ENCODE measurements at regions of chr6 and their contacts with region 1.

Region 1: DNA sequence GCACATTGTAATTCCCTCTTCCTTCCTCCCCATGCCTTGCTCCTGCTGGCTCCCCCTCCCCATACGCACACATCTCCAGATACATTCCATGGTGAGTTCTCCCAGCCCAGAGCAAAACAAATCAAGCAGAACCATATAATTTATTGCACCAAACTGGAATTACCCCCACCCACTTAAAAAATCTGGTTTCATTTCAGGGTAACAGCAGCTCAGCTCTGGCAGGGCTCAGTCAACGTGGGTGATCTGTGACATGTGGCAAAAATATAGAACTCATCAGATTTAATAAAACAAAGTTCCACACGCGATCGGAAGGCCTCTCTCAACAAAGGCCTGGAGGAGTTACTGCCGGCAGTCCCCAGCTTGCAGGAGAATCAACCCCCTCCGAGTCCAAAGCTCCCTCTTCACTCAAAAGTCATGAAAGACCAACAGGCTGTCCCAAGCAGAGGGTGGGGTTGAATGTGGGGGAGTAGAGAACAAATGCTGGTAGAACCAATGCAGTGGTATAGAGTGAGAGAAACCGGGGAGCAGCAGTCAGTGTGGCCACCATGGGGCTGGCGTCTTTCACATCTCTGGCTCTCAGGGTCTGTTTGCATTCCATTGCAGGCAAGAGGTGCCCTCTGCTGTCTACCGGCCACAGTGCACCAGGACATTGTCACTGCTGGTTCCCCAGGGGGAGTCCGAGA is 323.3 kb upstream of the NT5E start:
- DNase-seq: peak; percentile 73
- H3K4me3 Mint-ChIP-seq: no peak overlapping the region
- H3K27ac Mint-ChIP-seq: no peak overlapping the region
- H3K4me1 Mint-ChIP-seq: peaks cover 22% of the 10 kb centered on the region
- H3K27me3 Mint-ChIP-seq: no peaks in the 10 kb centered on the region
- CTCF ChIP-seq: peak; percentile 80

Region 2: DNA sequence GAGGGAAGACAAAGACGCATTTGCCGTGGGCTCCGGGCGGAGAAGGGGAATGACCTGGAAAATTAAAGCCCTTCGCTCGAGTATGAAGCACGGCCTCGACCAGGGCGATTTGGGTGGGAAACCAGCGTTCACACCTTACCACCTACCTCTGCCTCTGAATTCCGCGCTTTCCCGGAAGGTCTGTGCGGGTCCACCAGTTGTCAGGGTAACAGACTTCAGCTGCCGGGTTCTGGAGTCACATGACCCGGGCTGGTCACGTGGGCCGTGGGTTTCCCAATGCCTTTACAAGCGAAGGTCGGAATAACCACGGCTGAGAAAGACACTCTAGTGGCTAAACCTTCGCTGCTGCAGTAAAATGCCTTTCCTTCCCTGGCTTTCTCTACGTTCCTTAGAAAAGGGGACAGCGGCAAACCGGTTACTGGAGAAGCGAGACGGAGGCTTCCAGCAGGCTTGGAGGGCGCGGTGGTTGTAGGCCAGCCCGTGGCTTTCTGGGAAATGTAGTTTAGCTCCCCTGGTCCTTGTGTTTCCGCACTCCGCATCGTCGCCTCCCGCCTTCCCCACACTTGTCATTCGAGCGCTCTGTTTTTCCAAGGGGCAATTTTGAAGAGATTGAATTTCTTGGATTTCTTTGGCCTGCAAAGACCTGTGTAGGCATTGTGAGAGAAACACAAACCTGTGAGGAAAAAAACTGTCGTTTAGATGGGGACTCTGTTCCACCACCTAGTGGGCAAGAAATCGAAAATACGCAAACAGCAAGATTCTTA is 899.0 kb before region 1 on chr6 and contains the start of gene CEP162:
- CTCF ChIA-PET with region 1: interaction called, 4 read pairs
- POLR2A ChIA-PET with region 1: no interaction called
- intact Hi-C with region 1: loop called (anchors 5 kb)
- DNase-seq: peak; percentile 87
- H3K4me3 Mint-ChIP-seq: peak within 1 kb of the TSS; percentile 94
- H3K27ac Mint-ChIP-seq: peak within 1 kb of the TSS; percentile 72
- H3K4me1 Mint-ChIP-seq: peaks cover 13% of the 10 kb centered on the region
- H3K27me3 Mint-ChIP-seq: peaks cover 18% of the 10 kb centered on the region
- CTCF ChIP-seq: peak; percentile 75
- total RNA-seq, gene CEP162: 2.4 and 2.9 TPM in 2 replicates

Region 3: GRCh38 chr6:84346364-84346763 is 780.3 kb before region 1 on chr6:
- CTCF ChIA-PET with region 1: no interaction called
- POLR2A ChIA-PET with region 1: no interaction called
- intact Hi-C with region 1: loop called (anchors 1 kb)
- DNase-seq: peak; percentile 13
- H3K4me3 Mint-ChIP-seq: no peak overlapping the region
- H3K27ac Mint-ChIP-seq: no peak overlapping the region
- H3K4me1 Mint-ChIP-seq: peaks cover 5% of the 10 kb centered on the region
- H3K27me3 Mint-ChIP-seq: no peaks in the 10 kb centered on the region
- CTCF ChIP-seq: peak; percentile 23

Region 4: DNA sequence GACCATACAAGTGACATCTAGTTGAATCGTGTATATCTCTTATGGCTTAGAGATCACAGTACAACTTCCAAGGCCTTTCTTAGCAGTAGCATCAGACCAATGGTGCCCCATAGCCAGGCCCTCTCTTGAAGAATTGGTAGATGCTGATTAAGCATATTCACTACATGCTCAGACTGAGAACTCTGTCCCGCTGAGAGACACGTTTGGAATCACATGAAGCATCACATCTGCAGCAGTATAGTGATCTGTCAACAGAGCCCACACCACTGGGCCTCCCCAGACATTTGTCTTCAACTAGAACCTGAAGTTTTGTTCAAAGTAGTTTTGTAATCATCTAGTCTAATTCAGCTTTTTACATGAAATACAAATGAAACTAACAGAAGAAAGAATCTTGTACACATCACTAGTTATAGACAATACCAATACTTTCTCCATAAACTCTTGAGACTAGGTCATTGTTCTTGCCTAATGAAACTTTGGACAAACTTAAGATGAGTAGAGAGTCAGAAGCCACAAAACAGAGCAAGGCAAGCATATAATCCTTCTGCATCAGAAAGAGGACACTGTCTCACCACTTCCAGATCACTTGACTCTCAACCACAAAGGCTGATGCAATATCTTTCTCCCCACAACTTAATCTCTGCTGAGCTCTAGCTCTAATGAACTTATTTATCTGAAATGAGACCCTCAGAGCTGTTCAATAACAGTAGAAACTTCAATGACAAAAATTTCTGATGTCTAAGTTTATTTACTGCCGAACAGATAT is 544.9 kb before region 1 on chr6:
- CTCF ChIA-PET with region 1: no interaction called
- POLR2A ChIA-PET with region 1: no interaction called
- intact Hi-C with region 1: loop called (anchors 5 kb)
- DNase-seq: peak; percentile 51
- H3K4me3 Mint-ChIP-seq: no peak overlapping the region
- H3K27ac Mint-ChIP-seq: peak overlapping the region; percentile 68
- H3K4me1 Mint-ChIP-seq: peaks cover 6% of the 10 kb centered on the region
- H3K27me3 Mint-ChIP-seq: no peaks in the 10 kb centered on the region
- CTCF ChIP-seq: no peak

Region 5: GRCh38 chr6:84897988-84898594 is 228.5 kb before region 1 on chr6:
- CTCF ChIA-PET with region 1: no interaction called
- POLR2A ChIA-PET with region 1: no interaction called
- intact Hi-C with region 1: loop called (anchors 2 kb)
- DNase-seq: peak; percentile 83
- H3K4me3 Mint-ChIP-seq: peak overlapping the region; percentile 54
- H3K27ac Mint-ChIP-seq: peak overlapping the region; percentile 98
- H3K4me1 Mint-ChIP-seq: peaks cover 52% of the 10 kb centered on the region
- H3K27me3 Mint-ChIP-seq: no peaks in the 10 kb centered on the region
- CTCF ChIP-seq: no peak

Region 6: DNA sequence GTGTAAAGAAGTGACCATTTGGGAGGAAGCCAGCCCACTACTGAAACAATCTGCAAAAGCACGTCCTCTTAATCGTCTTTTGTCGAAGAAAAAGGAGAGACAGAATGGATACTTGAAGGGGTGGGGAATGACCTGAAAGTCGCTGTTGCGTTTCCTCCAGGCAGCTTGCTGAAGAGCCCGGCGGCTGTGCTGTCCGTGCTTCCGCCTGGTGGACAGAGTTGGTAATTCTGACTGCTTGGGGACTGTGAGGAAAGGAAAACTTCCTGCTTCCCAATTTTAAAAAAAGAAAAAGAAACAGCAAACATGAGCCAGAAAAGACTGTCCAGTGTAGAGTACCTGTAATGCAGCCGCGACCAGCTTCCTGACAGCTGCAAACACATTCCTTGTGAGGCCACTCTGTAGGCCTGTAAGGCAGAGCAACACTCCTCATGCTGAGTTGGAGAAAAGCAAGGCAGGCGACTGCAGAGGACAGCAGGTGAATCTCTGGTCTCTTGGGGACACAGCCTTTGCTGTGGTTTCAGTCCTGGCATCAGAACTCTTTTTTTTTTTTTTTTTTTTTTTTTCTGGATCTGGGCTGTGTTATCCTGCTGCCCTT is 111.1 kb before region 1 on chr6:
- CTCF ChIA-PET with region 1: no interaction called
- POLR2A ChIA-PET with region 1: no interaction called
- intact Hi-C with region 1: loop called (anchors 2 kb)
- DNase-seq: peak; percentile 64
- H3K4me3 Mint-ChIP-seq: no peak overlapping the region
- H3K27ac Mint-ChIP-seq: no peak overlapping the region
- H3K4me1 Mint-ChIP-seq: no peaks in the 10 kb centered on the region
- H3K27me3 Mint-ChIP-seq: no peaks in the 10 kb centered on the region
- CTCF ChIP-seq: peak; percentile 65

Region 7: GRCh38 chr6:85085875-85086274 is 40.8 kb before region 1 on chr6:
- CTCF ChIA-PET with region 1: no interaction called
- POLR2A ChIA-PET with region 1: no interaction called
- intact Hi-C with region 1: no loop called
- DNase-seq: no peak
- H3K4me3 Mint-ChIP-seq: no peak overlapping the region
- H3K27ac Mint-ChIP-seq: no peak overlapping the region
- H3K4me1 Mint-ChIP-seq: no peaks in the 10 kb centered on the region
- H3K27me3 Mint-ChIP-seq: no peaks in the 10 kb centered on the region
- CTCF ChIP-seq: no peak